Activated CD8-positive, alpha-beta memory T cell treated with anti-CD3 and anti-CD28 coated beads, Interleukin-2, amount 10 ng/mL, durations not matched to agents 7 days and 5 days (primary cell): ENCODE measurements at regions of chr6 and their contacts with region 1.

Region 1: DNA sequence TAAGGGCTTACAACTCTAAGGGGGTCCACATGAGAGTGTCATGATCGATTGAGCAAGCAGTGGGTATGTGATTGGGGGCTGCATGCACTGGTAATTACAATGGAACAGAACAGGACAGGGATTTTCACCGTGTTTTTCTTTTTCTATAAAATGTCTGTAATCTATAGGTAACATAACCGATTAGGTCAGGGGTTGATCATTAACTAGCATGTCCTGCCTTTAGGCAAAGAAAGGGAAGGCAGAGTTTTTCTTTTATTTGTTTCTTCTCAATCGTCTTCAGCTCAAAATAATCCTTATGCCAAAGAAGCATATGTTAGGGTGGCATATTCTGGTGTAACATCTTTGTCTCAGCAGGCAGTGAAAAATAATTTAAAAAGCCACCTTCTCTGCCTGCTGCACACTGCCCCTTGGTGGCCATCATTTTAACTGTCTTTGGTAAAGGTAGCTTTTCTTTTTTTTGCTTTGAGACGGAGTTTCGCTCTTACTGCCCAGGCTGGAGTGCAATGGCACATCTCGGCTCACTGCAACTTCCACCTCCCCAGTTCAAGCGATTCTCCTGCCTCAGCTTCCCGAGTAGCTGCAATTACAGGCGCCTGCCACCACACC is 9.7 kb upstream of the CEP43 start:
- DNase-seq: no peak
- ATAC-seq: no peak
- H3K4me3 Mint-ChIP-seq: no peak overlapping the region
- H3K27ac Mint-ChIP-seq: peak overlapping the region; percentile 26
- H3K4me1 Mint-ChIP-seq: peaks cover 14% of the 10 kb centered on the region
- H3K27me3 Mint-ChIP-seq: no peaks in the 10 kb centered on the region

Region 2: GRCh38 chr6:166786704-166787293 is 202.7 kb before region 1 on chr6:
- CTCF ChIA-PET with region 1: interaction called, 17 read pairs
- DNase-seq: no peak
- ATAC-seq: peak; percentile 36
- H3K4me3 Mint-ChIP-seq: no peak overlapping the region
- H3K27ac Mint-ChIP-seq: no peak overlapping the region
- H3K4me1 Mint-ChIP-seq: no peaks in the 10 kb centered on the region
- H3K27me3 Mint-ChIP-seq: peaks cover 9% of the 10 kb centered on the region

Region 3: DNA sequence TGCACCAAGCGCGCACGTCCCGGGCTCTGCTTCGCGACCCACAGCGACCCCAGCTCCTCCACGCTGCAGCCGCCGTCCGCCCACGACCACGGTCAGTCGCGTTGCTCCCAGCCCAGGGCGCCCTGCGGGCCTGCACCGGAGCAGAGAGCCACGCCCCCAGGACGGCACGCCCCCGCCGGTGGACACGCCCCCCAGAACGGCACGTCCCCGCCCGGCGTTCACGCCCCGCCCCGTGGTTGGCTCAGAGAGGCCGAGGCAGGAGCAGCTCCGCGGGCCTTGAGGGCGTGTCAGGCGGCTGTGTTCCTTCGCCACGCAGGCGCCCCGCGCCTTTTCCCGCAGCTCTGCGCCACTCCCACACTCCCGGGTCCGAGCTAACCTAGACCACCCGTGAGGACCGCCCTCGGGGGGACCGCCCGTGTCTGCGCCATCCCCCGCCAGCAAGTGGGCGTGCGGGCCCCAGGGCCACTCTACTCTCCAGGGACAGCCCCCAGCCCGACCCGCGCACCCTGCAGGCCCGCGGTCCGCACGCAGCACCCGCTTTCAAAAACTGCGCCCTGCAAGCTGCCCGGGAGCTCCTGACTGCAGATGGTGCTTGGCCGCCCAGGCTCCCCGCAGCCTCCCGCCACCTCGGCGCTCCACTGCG is 33.0 kb before region 1 on chr6 and contains the start of gene RNASET2:
- CTCF ChIA-PET with region 1: interaction called, 12 read pairs
- DNase-seq: peak; percentile 98
- ATAC-seq: peak; percentile 87
- H3K4me3 Mint-ChIP-seq: peak within 1 kb of the TSS; percentile 80
- H3K27ac Mint-ChIP-seq: peak within 1 kb of the TSS; percentile 91
- H3K4me1 Mint-ChIP-seq: peaks cover 55% of the 10 kb centered on the region
- H3K27me3 Mint-ChIP-seq: no peaks in the 10 kb centered on the region
- total RNA-seq, gene RNASET2: 28.8 to 46.6 TPM

Region 4: DNA sequence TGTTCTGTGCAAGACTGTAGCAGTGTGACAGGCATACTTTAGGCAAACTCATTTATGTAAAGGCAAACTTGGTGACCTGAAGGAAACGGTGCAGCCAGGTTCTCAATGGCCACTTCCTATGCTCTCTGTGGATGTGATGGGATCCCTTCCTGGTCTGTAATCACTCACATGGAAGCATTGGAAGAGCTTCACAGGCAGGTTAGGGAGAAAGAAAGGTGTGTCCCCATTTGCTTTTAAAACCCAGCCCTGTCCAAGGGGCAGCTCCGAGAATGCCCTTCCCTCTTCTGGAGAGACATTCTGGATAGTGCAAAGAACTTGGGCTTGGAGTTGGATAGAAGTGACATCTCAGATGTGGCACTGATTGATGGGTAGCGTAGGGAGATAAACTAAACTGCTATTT is 37.8 kb after region 1 on chr6:
- CTCF ChIA-PET with region 1: no interaction called
- DNase-seq: no peak
- ATAC-seq: no peak
- H3K4me3 Mint-ChIP-seq: no peak overlapping the region
- H3K27ac Mint-ChIP-seq: no peak overlapping the region
- H3K4me1 Mint-ChIP-seq: peaks cover 12% of the 10 kb centered on the region
- H3K27me3 Mint-ChIP-seq: no peaks in the 10 kb centered on the region

Region 5: GRCh38 chr6:167045835-167046580 is 56.5 kb after region 1 on chr6:
- CTCF ChIA-PET with region 1: no interaction called
- DNase-seq: no peak
- ATAC-seq: no peak
- H3K4me3 Mint-ChIP-seq: no peak overlapping the region
- H3K27ac Mint-ChIP-seq: peak overlapping the region; percentile 57
- H3K4me1 Mint-ChIP-seq: peaks cover 39% of the 10 kb centered on the region
- H3K27me3 Mint-ChIP-seq: no peaks in the 10 kb centered on the region